Right ventricle myocardium superior (tissue), 1 donor: ENCODE measurements at regions of chr1 and their contacts with region 1.

Region 1: DNA sequence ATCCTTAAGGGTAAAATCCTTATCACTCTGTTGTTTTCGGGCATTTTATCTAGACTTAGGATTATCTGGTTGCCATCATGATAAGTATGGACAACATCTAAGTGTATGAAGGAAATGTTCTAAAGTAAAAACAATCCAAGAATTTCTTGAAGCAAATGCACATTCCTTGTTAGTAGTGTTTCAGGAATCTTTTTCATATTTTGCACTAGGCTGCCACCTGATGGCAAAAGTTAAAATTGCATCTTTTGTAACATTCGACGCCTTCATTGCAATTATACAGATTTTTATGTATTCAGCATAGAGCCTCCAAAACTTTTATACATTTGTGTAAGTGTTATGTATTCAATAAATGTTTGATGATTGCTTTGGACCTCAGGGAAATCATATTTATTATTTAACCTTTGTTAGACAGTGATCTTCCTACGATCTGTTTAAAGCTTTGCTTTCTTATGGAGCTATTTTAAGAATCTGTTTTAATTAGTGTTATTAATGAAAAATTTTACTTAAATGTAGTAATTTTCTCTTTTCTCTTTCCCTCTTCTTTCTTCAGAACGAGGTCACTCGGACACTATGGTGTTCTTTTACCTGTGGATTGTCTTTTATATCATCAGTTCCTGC is 49.4 kb upstream of the KIAA1614 start:
- DNase-seq: no peak
- ATAC-seq: peak; percentile 73

Region 2: GRCh38 chr1:180515864-180516388 is 347.3 kb before region 1 on chr1:
- intact Hi-C with region 1: loop called (anchors 5 kb)
- DNase-seq: peak; percentile 58
- ATAC-seq: peak; percentile 98

Region 3: GRCh38 chr1:180533266-180533987 is 329.8 kb before region 1 on chr1:
- intact Hi-C with region 1: loop called (anchors 5 kb)
- DNase-seq: peak; percentile 69
- ATAC-seq: peak; percentile 84

Region 4: DNA sequence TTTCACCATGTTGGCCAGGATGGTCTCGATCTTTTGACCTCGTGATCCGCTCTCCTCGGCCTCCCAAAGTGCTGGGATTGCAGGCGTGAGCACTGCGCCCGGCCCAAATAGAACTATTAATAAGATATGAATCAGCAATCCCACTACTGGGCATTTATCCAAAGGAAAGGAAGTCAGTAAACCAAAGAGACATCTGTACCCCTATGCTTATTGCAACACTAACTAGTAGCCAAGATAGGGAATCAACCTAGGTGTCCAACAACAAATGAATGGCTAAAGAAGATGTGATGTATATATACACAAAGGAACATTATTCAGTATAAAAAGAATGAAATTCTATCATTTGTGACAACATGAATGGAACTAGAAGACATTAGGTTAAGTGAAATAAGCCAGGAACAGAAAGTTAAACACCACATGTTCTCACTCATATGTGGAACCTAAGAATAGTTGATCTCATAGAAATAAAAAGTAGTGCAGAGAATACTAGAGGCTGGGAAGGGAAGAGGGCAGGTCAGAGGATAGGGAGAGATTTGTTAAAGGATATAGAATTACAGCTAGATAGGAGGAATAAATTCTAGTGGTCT is 182.6 kb before region 1 on chr1:
- intact Hi-C with region 1: no loop called
- DNase-seq: no peak
- ATAC-seq: no peak

Region 5: DNA sequence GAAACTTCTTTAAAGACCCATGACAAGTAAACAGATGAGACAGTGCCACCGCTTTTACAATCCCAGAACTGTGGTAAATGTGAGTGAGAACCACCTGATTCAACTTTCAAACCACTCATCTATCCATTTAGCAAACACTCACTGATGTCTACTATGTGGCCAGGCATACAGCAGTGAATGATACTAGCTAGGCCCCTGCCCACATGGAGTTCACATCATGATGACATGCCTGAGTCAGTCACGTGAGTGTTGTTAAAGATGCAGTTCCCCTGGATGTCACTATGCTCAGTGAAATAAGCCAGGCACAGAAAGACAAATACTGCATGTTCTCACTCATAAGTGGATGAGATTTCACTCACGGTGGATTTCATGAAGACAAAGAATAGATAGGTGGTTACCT is 131.0 kb after region 1 on chr1:
- intact Hi-C with region 1: no loop called
- DNase-seq: no peak
- ATAC-seq: no peak